ENCODE measurements at regions of chr1 and their contacts with region 1.

Region 1: GRCh38 chr1:163361123-163361934 is 39.6 kb downstream of the NUF2 start:
- DNase-seq: peak; percentile 25
- H3K4me3 Mint-ChIP-seq: no peak overlapping the region
- H3K27ac Mint-ChIP-seq: no peak overlapping the region
- H3K4me1 Mint-ChIP-seq: peaks cover 2% of the 10 kb centered on the region
- H3K27me3 Mint-ChIP-seq: peaks cover 5% of the 10 kb centered on the region

Region 2: DNA sequence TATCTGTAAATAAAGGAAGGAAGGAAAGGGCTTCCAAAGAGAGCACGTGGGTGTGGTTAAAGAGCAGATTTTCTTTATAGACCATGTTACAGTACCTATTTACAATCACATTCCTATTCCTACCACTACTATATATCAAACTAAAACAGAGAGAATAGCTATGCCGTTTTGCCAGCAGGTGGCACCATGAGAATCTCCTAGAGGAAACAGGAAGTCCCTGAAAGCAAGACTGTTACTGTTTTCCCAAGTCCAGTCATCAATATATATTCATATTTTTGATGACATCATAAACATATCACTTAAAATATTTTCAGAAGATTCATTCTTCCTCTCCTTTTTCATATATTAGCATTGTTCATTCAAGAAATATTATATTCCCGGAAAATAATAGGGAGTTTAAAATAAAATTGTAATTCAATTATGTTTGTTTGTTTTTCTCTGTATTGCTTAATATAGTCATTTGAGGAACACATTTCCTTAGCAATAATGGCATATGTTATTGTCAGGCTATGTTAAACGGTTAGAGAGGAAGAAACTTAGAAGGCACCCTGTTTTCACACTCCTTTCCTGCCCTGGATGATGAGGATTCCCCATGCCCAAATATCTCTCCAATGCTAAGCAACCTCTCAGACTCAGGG is 507.0 kb before region 1 on chr1:
- CTCF ChIA-PET with region 1: no interaction called
- intact Hi-C with region 1: loop called (anchors 5 kb)
- DNase-seq: peak; percentile 79
- H3K4me3 Mint-ChIP-seq: no peak overlapping the region
- H3K27ac Mint-ChIP-seq: no peak overlapping the region
- H3K4me1 Mint-ChIP-seq: no peaks in the 10 kb centered on the region
- H3K27me3 Mint-ChIP-seq: no peaks in the 10 kb centered on the region

Region 3: GRCh38 chr1:163414778-163415177 is 53.4 kb after region 1 on chr1:
- CTCF ChIA-PET with region 1: no interaction called
- intact Hi-C with region 1: no loop called
- DNase-seq: no peak
- H3K4me3 Mint-ChIP-seq: no peak overlapping the region
- H3K27ac Mint-ChIP-seq: no peak overlapping the region
- H3K4me1 Mint-ChIP-seq: peaks cover 2% of the 10 kb centered on the region
- H3K27me3 Mint-ChIP-seq: peaks cover 25% of the 10 kb centered on the region

Region 4: DNA sequence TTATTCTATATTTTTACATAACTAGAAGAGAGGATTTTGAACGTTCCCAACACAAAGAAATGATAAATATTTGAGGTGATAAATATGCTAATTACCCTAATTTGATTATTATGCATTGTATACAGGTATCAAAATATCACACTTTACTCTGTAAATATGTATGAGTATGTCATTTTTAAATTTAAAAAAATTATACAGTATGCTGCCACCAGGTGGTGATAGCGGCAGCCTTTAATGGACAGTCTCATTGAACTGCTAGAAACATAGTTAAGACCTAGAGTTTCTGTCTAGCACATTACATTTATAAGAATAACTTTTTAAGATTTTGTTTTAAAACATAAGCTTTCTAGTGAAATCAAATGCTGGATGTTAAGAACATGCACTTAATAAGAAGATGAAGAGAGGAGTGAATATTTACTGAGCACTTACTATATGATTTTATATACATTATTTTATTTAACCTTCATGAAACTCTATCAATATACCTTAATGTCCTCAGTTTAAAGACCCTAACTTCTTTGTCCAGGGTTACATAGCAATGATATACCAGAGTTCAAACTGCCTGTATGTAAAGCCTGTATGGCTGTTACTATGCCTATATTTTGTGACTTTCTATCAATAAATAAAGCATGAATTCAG is 167.5 kb after region 1 on chr1:
- CTCF ChIA-PET with region 1: no interaction called
- intact Hi-C with region 1: loop called (anchors 10 kb)
- DNase-seq: peak; percentile 34
- H3K4me3 Mint-ChIP-seq: no peak overlapping the region
- H3K27ac Mint-ChIP-seq: no peak overlapping the region
- H3K4me1 Mint-ChIP-seq: no peaks in the 10 kb centered on the region
- H3K27me3 Mint-ChIP-seq: peaks cover 2% of the 10 kb centered on the region

Region 5: GRCh38 chr1:164382384-164382783 is 1021.1 kb after region 1 on chr1:
- CTCF ChIA-PET with region 1: no interaction called
- intact Hi-C with region 1: no loop called
- DNase-seq: no peak
- H3K4me3 Mint-ChIP-seq: no peak overlapping the region
- H3K27ac Mint-ChIP-seq: no peak overlapping the region
- H3K4me1 Mint-ChIP-seq: no peaks in the 10 kb centered on the region
- H3K27me3 Mint-ChIP-seq: no peaks in the 10 kb centered on the region

Region 6: GRCh38 chr1:165073185-165074007 is 1712.1 kb after region 1 on chr1:
- CTCF ChIA-PET with region 1: no interaction called
- intact Hi-C with region 1: loop called (anchors 2 kb)
- DNase-seq: no peak
- H3K4me3 Mint-ChIP-seq: no peak overlapping the region
- H3K27ac Mint-ChIP-seq: no peak overlapping the region
- H3K4me1 Mint-ChIP-seq: no peaks in the 10 kb centered on the region
- H3K27me3 Mint-ChIP-seq: no peaks in the 10 kb centered on the region

Measured in activated naive CD4-positive, alpha-beta T cell treated with anti-CD3 and anti-CD28 coated beads for 36 hours (primary cell).